Heart right ventricle (tissue), 16 donors: ENCODE measurements at regions of chr9 and their contacts with region 1.

Region 1: GRCh38 chr9:122264360-122265148 is at the starts of genes MRRF and RBM18:
- DNase-seq: peak; percentile 90 to 91
- ATAC-seq: peak; percentile 91 to 96 (median 93)
- H3K4me3 ChIP-seq: peak within 1 kb of the TSS; percentile 38 to 87 (median 68)
- H3K27ac ChIP-seq: peak within 1 kb of the TSS; percentile 46 to 98 (median 94)
- H3K4me1 ChIP-seq: peaks cover 5 to 72% (median 52%) of the 10 kb centered on the region in 9 donors
- H3K27me3 ChIP-seq: no peaks in the 10 kb centered on the region
- CTCF ChIP-seq: peak in 2 of 9 donors; percentile 6 to 25
- total RNA-seq, gene MRRF: 30.3 to 45.9 (median 39.1) TPM
- total RNA-seq, gene RBM18: 36.2 to 47.6 (median 43.4) TPM

Region 2: DNA sequence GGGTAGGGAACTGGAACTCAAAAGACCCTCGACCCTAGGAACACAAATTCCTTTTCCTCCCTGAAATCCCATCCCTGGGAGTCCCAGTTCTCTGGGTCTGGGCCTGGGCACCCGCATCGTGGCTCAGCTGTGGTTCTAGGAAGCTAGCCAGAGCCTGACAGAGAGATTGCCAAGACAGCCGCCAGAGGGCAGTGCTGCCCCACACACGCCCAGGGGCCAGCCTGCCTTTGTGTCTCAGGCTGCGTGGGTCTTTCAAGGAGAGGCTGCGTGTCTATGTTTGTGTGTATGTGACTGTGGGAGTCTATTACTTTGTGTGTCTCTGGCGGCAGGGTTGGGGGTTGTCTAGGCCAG is 139.4 kb before region 1 on chr9:
- intact Hi-C with region 1: loop called in 4 of 10 experiments (anchors 5 to 10 kb)
- DNase-seq: peak; percentile 79 to 85
- ATAC-seq: peak; percentile 78 to 91 (median 84)
- H3K4me3 ChIP-seq: no peak overlapping the region
- H3K27ac ChIP-seq: no peak overlapping the region
- H3K4me1 ChIP-seq: peaks cover 12 to 47% (median 30%) of the 10 kb centered on the region in 9 donors
- H3K27me3 ChIP-seq: peaks cover 0 to 32% (median 3%) of the 10 kb centered on the region in 7 donors
- CTCF ChIP-seq: peak in 8 of 9 donors; percentile 90 to 98 (median 96)

Region 3: DNA sequence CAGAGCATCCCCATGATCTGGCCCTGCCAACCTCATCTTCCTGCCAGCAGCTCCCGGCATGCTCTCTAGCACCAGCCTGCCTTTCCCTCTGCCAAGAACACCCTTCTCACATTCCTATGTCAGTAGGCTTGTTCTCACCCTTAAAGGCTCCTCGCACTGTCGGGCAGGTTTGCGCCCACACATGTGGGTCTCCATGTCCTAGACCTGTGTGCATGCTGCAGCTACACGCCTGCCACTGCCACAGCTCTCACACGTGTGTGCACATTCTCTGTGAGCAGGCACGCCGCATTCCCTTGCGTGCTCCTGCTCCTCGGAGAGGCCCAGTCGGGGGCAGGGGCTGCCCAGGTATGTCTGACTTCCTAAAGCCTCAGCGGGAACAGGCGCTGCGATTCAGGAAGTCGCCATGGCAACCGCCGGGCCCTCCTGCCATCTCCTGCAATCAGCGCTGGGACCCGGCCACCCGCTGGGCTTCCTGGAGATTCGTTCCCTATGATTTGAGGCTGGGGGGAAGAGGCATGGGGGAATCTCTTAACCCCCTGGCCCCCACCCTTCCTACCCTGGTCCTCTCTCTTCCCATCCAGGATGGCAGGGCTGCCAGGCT is 133.1 kb before region 1 on chr9:
- intact Hi-C with region 1: loop called in 4 of 10 experiments (anchors 5 to 10 kb)
- DNase-seq: peak in 1 of 2 donors; percentile 41
- ATAC-seq: peak; percentile 27 to 78 (median 64)
- H3K4me3 ChIP-seq: peak overlapping the region in 2 of 10 donors; percentile 11 to 17
- H3K27ac ChIP-seq: peak overlapping the region in 1 of 10 donors; percentile 6
- H3K4me1 ChIP-seq: peaks cover 9 to 82% (median 40%) of the 10 kb centered on the region in 9 donors
- H3K27me3 ChIP-seq: peaks cover 0 to 20% (median 0%) of the 10 kb centered on the region in 7 donors
- CTCF ChIP-seq: no peak

Region 4: DNA sequence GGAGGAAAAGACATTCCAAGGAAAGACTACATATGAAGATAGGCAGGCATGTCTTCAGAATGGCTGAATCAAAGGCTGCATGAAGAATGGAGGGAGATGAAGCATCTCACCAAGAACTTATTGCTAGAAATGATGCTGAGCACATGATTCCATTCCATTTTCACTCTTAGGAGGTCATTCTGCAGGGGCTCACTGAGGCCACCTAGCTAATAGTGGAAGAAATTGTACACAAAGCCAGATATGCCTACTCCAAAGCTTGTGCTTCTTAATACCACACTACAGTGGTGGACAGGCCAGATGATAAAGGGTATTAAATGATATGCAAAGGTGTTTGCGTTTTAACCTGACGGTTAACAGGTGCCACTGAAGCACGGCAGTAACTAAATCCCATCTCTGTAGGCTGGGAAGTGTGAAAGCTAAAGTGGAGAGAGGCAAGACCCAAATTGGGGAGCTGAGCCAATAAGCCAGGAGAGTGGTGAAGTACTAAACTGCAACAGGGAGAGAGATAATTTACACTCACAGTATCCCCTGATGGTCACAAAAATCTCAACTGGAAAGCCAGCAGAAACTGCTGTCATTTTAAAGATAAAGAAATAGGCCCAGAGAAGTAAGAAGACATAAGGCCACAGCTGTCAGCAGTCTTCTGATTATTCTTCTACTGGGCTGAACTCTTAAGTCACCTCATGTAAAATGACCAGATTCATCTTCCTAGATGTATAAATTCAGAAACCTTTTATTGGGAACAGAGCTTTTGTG is 119.5 kb before region 1 on chr9:
- intact Hi-C with region 1: loop called in 3 of 10 experiments (anchors 10 kb)
- DNase-seq: no peak
- ATAC-seq: peak in 3 of 8 donors; percentile 27 to 54 (median 40)
- H3K4me3 ChIP-seq: no peak overlapping the region
- H3K27ac ChIP-seq: peak overlapping the region in 4 of 10 donors; percentile 7 to 80 (median 54)
- H3K4me1 ChIP-seq: peaks cover 2 to 74% (median 34%) of the 10 kb centered on the region in 9 donors
- H3K27me3 ChIP-seq: no peaks in the 10 kb centered on the region
- CTCF ChIP-seq: peak in 8 of 9 donors; percentile 7 to 58 (median 44)

Region 5: GRCh38 chr9:122159026-122159924 is 105.3 kb before region 1 on chr9 and contains the starts of genes MORN5 and NDUFA8:
- intact Hi-C with region 1: loop called in 2 of 10 experiments (anchors 10 kb)
- DNase-seq: peak; percentile 96 to 97
- ATAC-seq: peak; percentile 97 to 99 (median 98)
- H3K4me3 ChIP-seq: peak within 1 kb of the TSS; percentile 65 to 97 (median 86)
- H3K27ac ChIP-seq: peak within 1 kb of the TSS; percentile 87 to 99 (median 96)
- H3K4me1 ChIP-seq: peaks cover 0 to 53% (median 43%) of the 10 kb centered on the region in 9 donors
- H3K27me3 ChIP-seq: no peaks in the 10 kb centered on the region
- CTCF ChIP-seq: peak in 3 of 9 donors; percentile 8 to 22 (median 18)
- total RNA-seq, gene MORN5: not detected
- total RNA-seq, gene NDUFA8: 222 to 327 (median 310) TPM

Region 6: DNA sequence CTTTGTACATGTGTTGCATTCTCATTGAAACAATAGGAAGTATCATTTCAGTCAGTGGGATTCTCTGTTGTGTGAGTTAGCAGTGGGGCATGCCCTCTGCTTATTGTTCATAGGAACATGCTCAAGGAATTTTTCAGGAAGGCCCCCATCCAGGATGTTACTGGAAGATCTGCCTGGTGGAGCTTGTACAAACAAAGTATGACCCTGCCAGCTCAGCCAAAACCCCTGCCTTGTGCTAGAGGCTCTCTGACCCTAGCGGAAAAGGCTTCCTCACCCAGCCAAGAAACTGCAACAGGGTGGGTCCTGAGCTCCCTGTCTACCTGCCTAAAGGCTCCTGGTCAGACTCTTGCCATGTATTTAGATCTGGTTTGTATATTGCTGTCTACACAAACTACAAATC is 43.4 kb after region 1 on chr9:
- intact Hi-C with region 1: loop called in 2 of 10 experiments (anchors 5 kb)
- DNase-seq: peak in 1 of 2 donors; percentile 15
- ATAC-seq: peak; percentile 28 to 81 (median 66)
- H3K4me3 ChIP-seq: no peak overlapping the region
- H3K27ac ChIP-seq: peak overlapping the region in 6 of 10 donors; percentile 13 to 63 (median 50)
- H3K4me1 ChIP-seq: peaks cover 0 to 40% (median 24%) of the 10 kb centered on the region in 9 donors
- H3K27me3 ChIP-seq: no peaks in the 10 kb centered on the region
- CTCF ChIP-seq: no peak

Region 7: GRCh38 chr9:122350638-122351355 is 86.2 kb after region 1 on chr9:
- intact Hi-C with region 1: loop called in 5 of 10 experiments (anchors 5 to 10 kb)
- DNase-seq: peak; percentile 80 to 84
- ATAC-seq: peak; percentile 69 to 87 (median 84)
- H3K4me3 ChIP-seq: no peak overlapping the region
- H3K27ac ChIP-seq: no peak overlapping the region
- H3K4me1 ChIP-seq: peaks cover 7 to 32% (median 21%) of the 10 kb centered on the region in 9 donors
- H3K27me3 ChIP-seq: peaks cover 0 to 14% (median 0%) of the 10 kb centered on the region in 7 donors
- CTCF ChIP-seq: peak; percentile 96 to 99 (median 97)